Activated B cell treated with CpG ODN at 0.5 μM for 24 hours (primary cell): ENCODE measurements at regions of chr6 and their contacts with region 1.

Region 1: GRCh38 chr6:130076512-130076911 is 58.1 kb downstream of the L3MBTL3 start:
- DNase-seq: no peak
- ATAC-seq: no peak
- H3K4me3 Mint-ChIP-seq: no peak overlapping the region
- H3K27ac Mint-ChIP-seq: peak overlapping the region; percentile 38
- H3K4me1 Mint-ChIP-seq: peaks cover 18% of the 10 kb centered on the region
- H3K27me3 Mint-ChIP-seq: no peaks in the 10 kb centered on the region
- CTCF ChIP-seq: no peak

Region 2: GRCh38 chr6:128168244-128168643 is 1908.3 kb before region 1 on chr6:
- CTCF ChIA-PET with region 1: no interaction called
- POLR2A ChIA-PET with region 1: no interaction called
- intact Hi-C with region 1: no loop called
- DNase-seq: no peak
- ATAC-seq: no peak
- H3K4me3 Mint-ChIP-seq: no peak overlapping the region
- H3K27ac Mint-ChIP-seq: no peak overlapping the region
- H3K4me1 Mint-ChIP-seq: no peaks in the 10 kb centered on the region
- H3K27me3 Mint-ChIP-seq: no peaks in the 10 kb centered on the region
- CTCF ChIP-seq: no peak

Region 3: GRCh38 chr6:129490521-129491245 is 585.8 kb before region 1 on chr6:
- CTCF ChIA-PET with region 1: no interaction called
- POLR2A ChIA-PET with region 1: no interaction called
- intact Hi-C with region 1: no loop called
- DNase-seq: no peak
- ATAC-seq: peak; percentile 88
- H3K4me3 Mint-ChIP-seq: peak overlapping the region; percentile 82
- H3K27ac Mint-ChIP-seq: peak overlapping the region; percentile 97
- H3K4me1 Mint-ChIP-seq: peaks cover 28% of the 10 kb centered on the region
- H3K27me3 Mint-ChIP-seq: no peaks in the 10 kb centered on the region
- CTCF ChIP-seq: no peak

Region 4: GRCh38 chr6:130047088-130047995 is 29.2 kb before region 1 on chr6:
- CTCF ChIA-PET with region 1: no interaction called
- POLR2A ChIA-PET with region 1: no interaction called
- intact Hi-C with region 1: loop called (anchors 5 kb)
- DNase-seq: no peak
- ATAC-seq: no peak
- H3K4me3 Mint-ChIP-seq: no peak overlapping the region
- H3K27ac Mint-ChIP-seq: no peak overlapping the region
- H3K4me1 Mint-ChIP-seq: no peaks in the 10 kb centered on the region
- H3K27me3 Mint-ChIP-seq: no peaks in the 10 kb centered on the region
- CTCF ChIP-seq: no peak

Region 5: GRCh38 chr6:130239755-130240154 is 163.2 kb after region 1 on chr6:
- CTCF ChIA-PET with region 1: no interaction called
- POLR2A ChIA-PET with region 1: no interaction called
- intact Hi-C with region 1: loop called (anchors 5 kb)
- DNase-seq: no peak
- ATAC-seq: no peak
- H3K4me3 Mint-ChIP-seq: no peak overlapping the region
- H3K27ac Mint-ChIP-seq: no peak overlapping the region
- H3K4me1 Mint-ChIP-seq: no peaks in the 10 kb centered on the region
- H3K27me3 Mint-ChIP-seq: no peaks in the 10 kb centered on the region
- CTCF ChIP-seq: no peak

Region 6: GRCh38 chr6:130717657-130718056 is 641.1 kb after region 1 on chr6:
- CTCF ChIA-PET with region 1: no interaction called
- POLR2A ChIA-PET with region 1: no interaction called
- intact Hi-C with region 1: no loop called
- DNase-seq: no peak
- ATAC-seq: no peak
- H3K4me3 Mint-ChIP-seq: no peak overlapping the region
- H3K27ac Mint-ChIP-seq: no peak overlapping the region
- H3K4me1 Mint-ChIP-seq: peaks cover 5% of the 10 kb centered on the region
- H3K27me3 Mint-ChIP-seq: no peaks in the 10 kb centered on the region
- CTCF ChIP-seq: no peak